WTC11 (cell line): ENCODE measurements at regions of chr12 and their contacts with region 1.

Region 1: DNA sequence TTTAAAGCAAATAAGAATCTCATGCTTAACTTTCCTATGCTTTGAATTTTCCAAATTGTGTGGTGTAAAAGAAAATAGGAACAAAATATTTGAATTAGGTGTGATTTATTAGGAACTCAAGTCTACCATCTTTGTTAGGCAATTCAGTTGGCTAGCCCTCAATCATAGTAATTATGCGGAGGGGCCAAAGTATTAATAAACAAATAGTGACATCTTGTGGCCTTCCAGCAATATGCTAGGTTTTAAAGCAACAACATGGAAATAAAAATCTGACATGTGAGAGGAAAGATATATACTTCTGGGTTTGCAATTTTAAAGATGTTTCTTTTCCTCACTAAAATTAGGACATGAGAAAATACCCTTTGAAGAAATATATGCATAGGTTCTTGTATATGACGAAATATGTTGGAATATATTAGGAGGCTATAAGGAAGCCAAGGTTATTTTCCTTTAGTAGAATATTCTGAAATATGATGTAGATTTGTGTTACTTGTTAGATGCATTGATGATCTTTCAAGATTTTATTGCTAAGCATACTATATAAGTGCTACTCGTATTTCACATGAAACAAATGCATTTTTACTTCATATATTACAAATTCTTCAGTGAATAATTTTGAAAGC is 200.4 kb downstream of the PTPRO start:
- DNase-seq: no peak
- ATAC-seq: peak; percentile 29; the same call in 1 of the 2 replicates
- H3K4me3 Mint-ChIP-seq: no peak overlapping the region
- H3K27ac Mint-ChIP-seq: no peak overlapping the region
- H3K4me1 Mint-ChIP-seq: peaks cover 16% of the 10 kb centered on the region
- H3K27me3 Mint-ChIP-seq: no peaks in the 10 kb centered on the region; the same call in 1 of the 2 replicates
- CTCF ChIP-seq: no peak

Region 2: DNA sequence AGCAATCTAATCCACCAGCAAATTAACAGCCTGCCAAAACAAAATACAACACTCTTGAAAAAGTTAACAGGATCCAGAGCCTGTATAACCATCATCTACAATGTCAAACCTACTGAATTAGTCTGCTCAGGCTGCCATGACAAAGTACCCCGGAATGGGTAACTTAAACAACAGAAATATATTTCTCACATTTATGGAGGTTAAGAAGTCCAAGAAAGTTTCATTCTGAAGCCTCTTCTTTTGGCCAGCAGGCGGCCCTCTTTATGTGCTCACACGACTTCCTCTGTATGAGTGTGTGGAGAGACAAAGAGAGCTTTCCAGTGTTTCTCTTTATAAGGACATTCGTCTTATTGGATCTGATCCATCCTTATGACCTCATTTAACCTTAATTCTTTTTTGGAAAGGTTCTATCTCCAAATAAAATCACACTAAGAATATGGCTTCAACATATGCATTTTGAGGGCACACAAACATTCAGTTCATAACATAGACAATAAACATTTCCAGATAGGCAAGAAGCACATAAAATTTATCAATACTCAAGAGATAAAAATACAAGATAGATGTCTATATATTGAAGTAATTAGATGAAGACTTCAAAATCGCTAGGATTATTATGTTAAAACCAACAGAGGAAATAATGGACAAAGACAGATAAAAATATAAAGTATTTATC is 295.5 kb before region 1 on chr12:
- CTCF ChIA-PET with region 1: interaction called, 20 read pairs
- POLR2A ChIA-PET with region 1: no interaction called
- DNase-seq: peak; percentile 47
- ATAC-seq: peak; percentile 83
- H3K4me3 Mint-ChIP-seq: no peak overlapping the region
- H3K27ac Mint-ChIP-seq: no peak overlapping the region
- H3K4me1 Mint-ChIP-seq: peaks cover 3% of the 10 kb centered on the region; the same call in 1 of the 2 replicates
- H3K27me3 Mint-ChIP-seq: peaks cover 15% of the 10 kb centered on the region
- CTCF ChIP-seq: 0 out of 2 replicates have a peak, but pooled peaks have one; percentile 38

Region 3: GRCh38 chr12:15276088-15276698 is 246.5 kb before region 1 on chr12:
- CTCF ChIA-PET with region 1: interaction called, 18 read pairs
- POLR2A ChIA-PET with region 1: no interaction called
- DNase-seq: no peak
- ATAC-seq: peak; percentile 80
- H3K4me3 Mint-ChIP-seq: no peak overlapping the region
- H3K27ac Mint-ChIP-seq: no peak overlapping the region
- H3K4me1 Mint-ChIP-seq: peaks cover 7% of the 10 kb centered on the region
- H3K27me3 Mint-ChIP-seq: no peaks in the 10 kb centered on the region
- CTCF ChIP-seq: peak; percentile 65; the same call in 1 of the 2 replicates